Dendritic cell treated with granulocyte-macrophage colony-stimulating factor and Interleukin-4, amounts not matched to agents 40 ng/mL and 50 ng/mL, for 4 days (primary cell): ENCODE measurements at regions of chr20 and their contacts with region 1.

Region 1: GRCh38 chr20:1392823-1393506 is at the start of gene FKBP1A:
- H3K4me3 Mint-ChIP-seq: peak within 1 kb of the TSS; percentile 84
- H3K27ac Mint-ChIP-seq: peak within 1 kb of the TSS; percentile 90
- H3K4me1 Mint-ChIP-seq: peaks cover 63% of the 10 kb centered on the region
- H3K27me3 Mint-ChIP-seq: peaks cover 13% of the 10 kb centered on the region

Region 2: DNA sequence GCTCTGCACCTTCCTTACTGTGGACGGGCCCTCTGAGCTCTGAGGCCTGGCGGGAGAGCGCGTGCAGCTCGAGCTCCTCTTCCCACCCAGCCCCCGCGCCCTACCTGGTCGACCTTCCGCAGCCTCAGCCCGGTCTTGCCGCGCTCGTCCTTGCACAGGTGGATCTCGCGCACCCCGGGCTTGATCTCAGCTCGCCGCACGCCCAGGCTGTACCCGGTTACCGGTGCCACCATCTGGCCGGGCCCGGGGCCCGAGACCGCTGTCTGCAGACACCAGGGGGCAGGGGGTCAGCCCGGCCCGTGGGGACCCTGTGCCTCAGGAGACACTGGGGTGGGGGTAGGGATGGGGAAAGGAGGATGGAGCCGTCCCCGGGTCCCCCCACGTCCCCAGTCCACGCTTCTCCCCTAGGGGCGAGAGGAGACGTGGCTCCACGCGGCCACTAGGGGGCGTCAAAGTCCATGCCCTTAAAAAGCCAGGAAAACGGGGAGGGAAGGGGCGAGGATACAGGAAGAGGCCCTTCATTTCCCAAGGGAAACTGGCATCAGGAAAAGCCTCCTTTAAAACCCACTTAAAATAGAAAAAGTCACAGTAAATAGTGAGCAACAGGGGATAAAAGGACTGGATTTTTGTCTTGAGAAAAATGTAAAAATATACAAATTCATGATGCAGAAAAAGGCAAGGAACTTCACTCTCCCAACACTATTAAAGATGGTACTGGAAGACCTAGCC is 79.6 kb before region 1 on chr20:
- intact Hi-C with region 1: loop called (anchors 5 kb)
- H3K4me3 Mint-ChIP-seq: no peak overlapping the region
- H3K27ac Mint-ChIP-seq: no peak overlapping the region
- H3K4me1 Mint-ChIP-seq: peaks cover 12% of the 10 kb centered on the region
- H3K27me3 Mint-ChIP-seq: peaks cover 8% of the 10 kb centered on the region

Region 3: GRCh38 chr20:1325173-1326030 is 67.6 kb before region 1 on chr20:
- intact Hi-C with region 1: loop called (anchors 1 kb)
- H3K4me3 Mint-ChIP-seq: no peak overlapping the region
- H3K27ac Mint-ChIP-seq: no peak overlapping the region
- H3K4me1 Mint-ChIP-seq: peaks cover 29% of the 10 kb centered on the region
- H3K27me3 Mint-ChIP-seq: no peaks in the 10 kb centered on the region

Region 4: DNA sequence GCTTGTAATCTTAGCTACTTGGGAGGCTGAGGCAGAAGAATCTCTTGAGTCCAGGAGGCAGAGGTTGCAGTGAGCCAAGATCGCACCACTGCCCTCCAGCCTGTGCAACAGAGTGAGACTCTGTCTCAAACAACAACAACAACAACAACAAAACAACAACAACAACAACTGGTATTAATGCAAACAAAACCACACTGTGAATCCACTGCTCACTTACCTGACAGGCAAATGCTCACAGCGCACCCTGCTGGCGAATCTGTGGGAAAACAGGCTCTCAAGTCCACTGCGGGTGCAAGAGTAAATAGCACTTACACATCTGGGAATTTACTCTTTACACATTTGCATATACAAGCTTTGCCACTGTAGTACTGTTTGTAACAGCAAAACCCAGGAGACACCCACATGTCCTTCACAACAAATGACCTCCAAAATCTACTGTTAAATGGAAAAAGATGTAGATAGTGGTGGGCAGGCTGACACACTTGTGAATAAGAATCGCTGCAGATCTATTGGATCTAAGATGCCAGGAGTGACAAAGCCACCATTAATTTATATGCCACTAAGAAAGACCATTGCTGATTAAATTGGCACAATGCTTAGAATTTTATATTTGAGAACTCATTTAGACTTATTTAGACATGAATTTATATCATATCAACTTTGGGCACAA is 44.4 kb after region 1 on chr20:
- intact Hi-C with region 1: loop called (anchors 5 kb)
- H3K4me3 Mint-ChIP-seq: no peak overlapping the region
- H3K27ac Mint-ChIP-seq: no peak overlapping the region
- H3K4me1 Mint-ChIP-seq: peaks cover 23% of the 10 kb centered on the region
- H3K27me3 Mint-ChIP-seq: peaks cover 7% of the 10 kb centered on the region

Region 5: DNA sequence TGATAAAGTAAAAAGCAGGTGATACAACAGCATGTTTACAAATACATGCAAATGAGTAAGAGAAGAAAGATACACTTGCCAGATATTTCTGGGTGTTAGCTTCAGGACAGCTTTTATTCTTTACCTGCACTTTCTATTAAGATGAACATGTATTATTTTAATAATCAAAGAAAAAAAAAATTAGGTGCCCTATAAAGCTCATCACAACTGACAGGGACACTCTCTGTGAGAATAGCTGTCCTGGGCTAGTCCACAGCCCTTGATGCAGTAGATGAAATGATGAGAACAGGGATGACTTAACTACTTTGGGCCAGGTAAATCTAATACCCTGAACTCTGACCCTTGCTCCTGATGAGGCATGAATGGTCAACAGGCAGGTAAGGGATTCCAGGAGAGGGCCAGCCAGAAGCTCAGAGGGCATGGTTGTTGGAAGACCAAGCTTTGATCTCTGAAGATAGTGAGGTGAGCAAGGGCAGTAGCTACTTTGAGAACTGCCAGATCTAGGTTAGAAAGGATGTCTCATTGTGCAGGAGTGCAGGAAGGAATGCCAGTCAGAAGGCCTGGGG is 58.0 kb after region 1 on chr20:
- intact Hi-C with region 1: no loop called
- H3K4me3 Mint-ChIP-seq: no peak overlapping the region
- H3K27ac Mint-ChIP-seq: no peak overlapping the region
- H3K4me1 Mint-ChIP-seq: no peaks in the 10 kb centered on the region
- H3K27me3 Mint-ChIP-seq: no peaks in the 10 kb centered on the region